Sciatic nerve (tissue), 2 donors: ENCODE measurements at regions of chrX and their contacts with region 1.

Region 1: GRCh38 chrX:87040039-87040438 is 477.6 kb upstream of the KLHL4 start:
- DNase-seq: no peak
- ATAC-seq: no peak

Region 2: GRCh38 chrX:88101968-88102367 is 1061.9 kb after region 1 on chrX:
- intact Hi-C with region 1: loop called (anchors 5 kb)
- DNase-seq: no peak
- ATAC-seq: no peak